Left lung (tissue), 14 donors: ENCODE measurements at regions of chr1 and their contacts with region 1.

Region 1: DNA sequence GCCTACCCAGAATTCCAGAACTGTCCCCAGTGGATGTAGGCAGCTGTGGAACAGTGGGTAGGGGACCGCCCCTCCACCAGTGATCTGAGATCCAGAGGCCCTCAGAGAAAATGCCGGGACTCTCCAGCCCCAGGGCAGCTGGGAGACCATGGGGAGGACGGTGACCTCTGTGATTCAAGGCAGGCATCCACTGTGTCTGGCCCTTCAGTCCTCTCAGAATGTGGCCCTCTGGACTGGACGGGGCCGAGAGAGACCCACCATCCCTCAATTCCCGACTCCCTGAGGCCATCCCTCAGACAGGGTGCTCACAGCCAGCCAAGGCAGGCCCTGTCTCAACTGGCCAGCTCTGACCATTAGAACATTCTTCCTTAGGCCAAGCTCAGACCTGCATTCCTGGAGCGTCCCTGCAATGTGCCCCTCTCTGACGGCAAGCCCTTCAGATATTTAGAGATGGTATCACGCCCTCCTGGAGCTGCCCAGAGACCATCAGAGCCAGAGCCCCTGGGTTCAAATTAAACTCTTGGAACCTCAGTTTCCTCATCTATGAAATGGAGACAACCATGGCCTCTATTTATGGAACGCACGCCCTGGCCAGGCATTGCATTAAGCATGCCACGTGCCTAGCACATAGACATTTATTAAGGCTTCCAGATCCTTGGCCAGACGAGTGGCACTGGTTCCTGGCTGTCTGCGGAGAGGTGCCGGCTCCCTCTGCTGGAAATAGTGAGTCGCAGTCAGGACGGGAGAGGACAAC is 9.6 kb upstream of the EPS8L3 start:
- DNase-seq: peak; percentile 65 to 90 (median 86)
- ATAC-seq: peak; percentile 93
- H3K4me3 ChIP-seq: no peak overlapping the region
- H3K27ac ChIP-seq: no peak overlapping the region
- H3K4me1 ChIP-seq: peaks cover 0 to 14% of the 10 kb centered on the region in 2 donors
- H3K27me3 ChIP-seq: no peaks in the 10 kb centered on the region
- CTCF ChIP-seq: peak; percentile 65 to 84

Region 2: GRCh38 chr1:109548321-109549267 is 224.7 kb before region 1 on chr1 and contains the start of gene GNAI3:
- intact Hi-C with region 1: loop called in 1 of 2 experiments (anchors 10 kb)
- DNase-seq: peak; percentile 96 to 99 (median 97)
- ATAC-seq: peak; percentile 98
- H3K4me3 ChIP-seq: peak within 1 kb of the TSS; percentile 71 to 83
- H3K27ac ChIP-seq: peak within 1 kb of the TSS; percentile 93 to 98
- H3K4me1 ChIP-seq: peaks cover 23 to 61% of the 10 kb centered on the region in 2 donors
- H3K27me3 ChIP-seq: no peaks in the 10 kb centered on the region
- CTCF ChIP-seq: no peak
- polyA plus RNA-seq, gene GNAI3: 9.8 to 11.5 (median 11.1) TPM

Region 3: DNA sequence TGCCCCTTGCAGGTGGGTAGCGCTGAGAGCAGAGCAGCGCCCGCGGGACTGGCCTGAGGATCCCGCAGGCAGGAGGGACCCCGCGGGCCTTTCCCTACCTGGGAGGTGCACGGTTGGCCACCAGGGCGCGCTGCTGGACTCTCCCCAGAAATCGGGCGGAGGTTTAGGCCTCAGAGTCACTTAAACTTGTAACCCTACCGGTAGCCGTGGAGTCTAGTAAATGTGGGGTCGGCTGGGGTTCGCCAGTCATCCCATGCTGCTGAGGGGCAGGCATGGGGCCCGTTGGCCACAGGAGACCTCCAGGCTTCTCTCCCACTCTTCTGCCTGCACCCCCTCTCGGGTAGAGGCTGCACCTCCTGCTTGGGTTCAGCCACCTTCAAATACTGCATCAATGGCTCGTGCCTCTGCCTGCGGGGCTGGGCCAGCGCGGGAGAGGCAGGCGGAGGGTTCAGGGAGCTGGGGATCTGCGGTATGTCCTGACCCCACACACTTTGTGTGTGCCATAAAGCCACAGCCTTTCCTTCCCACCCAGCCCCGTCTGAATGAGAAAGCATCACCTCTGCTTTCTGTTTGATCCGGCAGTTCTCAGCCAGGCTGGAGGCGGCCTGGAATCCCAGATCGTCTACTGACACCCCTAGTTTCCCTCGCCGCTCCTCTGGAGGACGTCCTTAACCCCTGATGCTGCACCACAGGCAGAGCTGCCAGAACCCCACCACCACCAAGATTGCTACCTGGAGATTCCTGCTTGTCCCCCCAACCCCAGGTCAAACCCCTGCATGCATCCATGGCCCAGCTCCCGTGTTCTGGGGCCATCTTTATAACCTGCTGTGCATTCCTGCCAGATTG is 129.7 kb before region 1 on chr1:
- intact Hi-C with region 1: loop called in 1 of 2 experiments (anchors 5 kb)
- DNase-seq: peak; percentile 58 to 97 (median 80)
- ATAC-seq: peak; percentile 94
- H3K4me3 ChIP-seq: no peak overlapping the region
- H3K27ac ChIP-seq: no peak overlapping the region
- H3K4me1 ChIP-seq: peaks cover 0 to 11% of the 10 kb centered on the region in 2 donors
- H3K27me3 ChIP-seq: no peaks in the 10 kb centered on the region
- CTCF ChIP-seq: peak; percentile 80 to 92

Region 4: GRCh38 chr1:109655601-109656519 is 117.5 kb before region 1 on chr1 and contains the start of gene GSTM4:
- intact Hi-C with region 1: loop called in 1 of 2 experiments (anchors 10 kb)
- DNase-seq: peak; percentile 82 to 95 (median 84)
- ATAC-seq: peak; percentile 98
- H3K4me3 ChIP-seq: peak within 1 kb of the TSS; percentile 69 to 72
- H3K27ac ChIP-seq: peak within 1 kb of the TSS; percentile 69 to 81
- H3K4me1 ChIP-seq: peaks cover 0 to 18% of the 10 kb centered on the region in 2 donors
- H3K27me3 ChIP-seq: no peaks in the 10 kb centered on the region
- CTCF ChIP-seq: no peak
- polyA plus RNA-seq, gene GSTM4: 28.7 to 37.2 (median 29.8) TPM

Region 5: GRCh38 chr1:110089561-110090210 is 316.4 kb after region 1 on chr1:
- intact Hi-C with region 1: no loop called
- DNase-seq: no peak
- ATAC-seq: no peak
- H3K4me3 ChIP-seq: no peak overlapping the region
- H3K27ac ChIP-seq: no peak overlapping the region
- H3K4me1 ChIP-seq: peaks cover 0 to 5% of the 10 kb centered on the region in 2 donors
- H3K27me3 ChIP-seq: peaks cover 0 to 34% of the 10 kb centered on the region in 2 donors
- CTCF ChIP-seq: no peak

Region 6: DNA sequence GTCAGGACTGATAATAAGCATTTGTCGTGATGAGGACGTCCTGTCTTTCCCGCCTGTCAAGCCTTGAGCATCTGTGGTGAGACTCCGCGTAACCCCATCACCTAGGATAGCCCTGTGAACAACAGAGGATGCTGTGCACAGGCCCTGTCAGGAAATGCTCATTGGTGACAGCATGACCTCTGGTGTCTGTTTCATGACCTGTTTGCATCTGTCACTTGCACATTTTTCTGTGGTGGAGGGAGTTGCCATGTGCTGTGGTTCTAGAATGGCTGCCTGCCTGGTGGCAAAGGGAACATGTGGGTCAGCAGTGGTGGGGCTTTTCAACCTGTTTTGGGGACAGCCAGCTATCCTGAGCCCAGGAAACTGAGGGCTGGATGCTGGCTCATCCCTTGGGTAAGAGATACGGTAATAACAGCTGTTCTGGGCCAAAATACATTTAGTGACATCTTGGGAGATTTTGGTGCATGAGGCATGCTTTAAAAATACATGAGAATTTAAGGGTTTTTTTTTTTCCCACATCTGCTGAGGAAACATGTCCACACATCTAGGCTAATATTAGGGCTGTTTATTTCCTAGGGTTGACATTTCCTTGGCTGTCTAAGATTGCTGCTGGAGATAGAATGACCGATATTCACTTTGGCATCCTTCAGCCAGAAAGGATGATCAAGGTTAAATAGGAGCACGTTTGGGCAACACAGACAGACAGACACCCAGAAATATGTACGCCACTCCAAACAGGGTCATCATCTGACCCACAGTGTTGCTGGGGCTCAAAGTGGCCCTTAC is 489.7 kb after region 1 on chr1:
- intact Hi-C with region 1: no loop called
- DNase-seq: peak in 1 of 4 donors; percentile 28
- ATAC-seq: no peak
- H3K4me3 ChIP-seq: no peak overlapping the region
- H3K27ac ChIP-seq: peak overlapping the region in 1 of 2 donors; percentile 33
- H3K4me1 ChIP-seq: peaks cover 0 to 26% of the 10 kb centered on the region in 2 donors
- H3K27me3 ChIP-seq: no peaks in the 10 kb centered on the region
- CTCF ChIP-seq: no peak